ENCODE measurements at regions of chrX and their contacts with region 1.

Region 1: GRCh38 chrX:135516376-135516775 is 4.1 kb upstream of the INTS6L start:
- DNase-seq: no peak
- ATAC-seq: no peak
- H3K4me3 ChIP-seq: no peak overlapping the region
- H3K27ac ChIP-seq: no peak overlapping the region
- H3K4me1 ChIP-seq: peaks cover 0 to 14% (median 0%) of the 10 kb centered on the region in 12 donors
- H3K27me3 ChIP-seq: peaks cover 0 to 4% (median 0%) of the 10 kb centered on the region in 9 donors
- CTCF ChIP-seq: peak in 1 of 12 donors; percentile 15
- POLR2A ChIP-seq: no peak

Region 2: DNA sequence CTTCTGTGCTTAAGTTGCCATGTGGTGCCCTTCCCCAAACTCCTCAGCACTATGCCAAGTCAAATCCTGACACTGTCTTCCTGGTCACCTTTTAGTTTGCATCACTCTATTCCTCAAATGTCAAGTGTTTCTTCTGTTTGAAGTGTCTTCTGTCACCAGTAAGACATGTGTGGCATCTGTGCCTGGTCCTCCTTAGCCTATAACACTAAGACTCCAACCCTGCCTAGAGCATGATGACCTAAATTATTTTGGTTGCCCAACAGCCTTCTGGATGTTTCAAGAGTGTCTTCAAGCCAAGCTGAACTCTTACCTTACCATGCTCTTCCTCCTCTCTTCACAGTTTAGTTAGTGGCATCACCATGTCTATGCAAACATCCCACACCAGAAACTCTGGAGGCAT is 49.0 kb after region 1 on chrX:
- intact Hi-C with region 1: loop called in 1 of 10 experiments (anchors 10 kb)
- DNase-seq: no peak
- ATAC-seq: no peak
- H3K4me3 ChIP-seq: no peak overlapping the region
- H3K27ac ChIP-seq: no peak overlapping the region
- H3K4me1 ChIP-seq: no peaks in the 10 kb centered on the region
- H3K27me3 ChIP-seq: no peaks in the 10 kb centered on the region
- CTCF ChIP-seq: no peak
- POLR2A ChIP-seq: no peak

Measured in heart left ventricle (tissue), 16 donors.